AG04449 (cell line): ENCODE measurements at regions of chr20 and their contacts with region 1.

Region 1: GRCh38 chr20:47196091-47197081 is 160.1 kb downstream of the ZMYND8 start:
- DNase-seq: no peak
- H3K4me3 ChIP-seq: no peak overlapping the region
- CTCF ChIP-seq: peak; percentile 88

Region 2: DNA sequence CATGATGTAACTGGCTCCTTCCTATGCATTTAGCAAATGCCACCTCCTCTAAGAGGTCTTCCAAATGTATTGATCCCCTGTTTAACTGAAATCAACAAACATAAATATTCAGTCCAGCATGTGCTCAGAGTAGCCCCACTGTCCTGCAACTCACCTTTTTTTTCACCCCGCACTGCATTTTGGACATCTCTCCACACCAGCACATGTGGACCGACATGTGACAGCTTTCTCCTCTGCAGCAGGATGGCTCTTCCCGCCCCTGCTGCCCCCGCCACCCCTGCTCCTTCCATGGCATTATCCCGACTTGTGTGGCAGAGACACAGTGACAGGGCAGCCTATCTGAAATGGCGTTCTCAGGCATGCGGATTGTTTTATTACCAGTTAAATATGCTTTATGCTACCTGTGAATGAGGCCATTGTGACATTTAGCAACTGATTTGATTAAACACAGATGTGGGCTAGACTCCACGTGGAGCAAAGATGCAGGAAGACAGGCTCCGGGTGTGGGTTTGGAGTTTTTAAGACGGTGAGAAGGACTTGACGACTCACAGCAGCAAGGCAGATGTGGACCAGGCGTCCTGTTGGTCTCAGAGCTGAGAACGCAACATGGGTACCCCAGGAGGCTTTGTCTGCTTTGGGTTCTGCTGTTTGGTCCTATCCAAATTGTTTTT is 140.6 kb before region 1 on chr20:
- CTCF ChIA-PET with region 1: no interaction called
- POLR2A ChIA-PET with region 1: no interaction called
- DNase-seq: no peak
- H3K4me3 ChIP-seq: no peak overlapping the region
- CTCF ChIP-seq: no peak

Region 3: DNA sequence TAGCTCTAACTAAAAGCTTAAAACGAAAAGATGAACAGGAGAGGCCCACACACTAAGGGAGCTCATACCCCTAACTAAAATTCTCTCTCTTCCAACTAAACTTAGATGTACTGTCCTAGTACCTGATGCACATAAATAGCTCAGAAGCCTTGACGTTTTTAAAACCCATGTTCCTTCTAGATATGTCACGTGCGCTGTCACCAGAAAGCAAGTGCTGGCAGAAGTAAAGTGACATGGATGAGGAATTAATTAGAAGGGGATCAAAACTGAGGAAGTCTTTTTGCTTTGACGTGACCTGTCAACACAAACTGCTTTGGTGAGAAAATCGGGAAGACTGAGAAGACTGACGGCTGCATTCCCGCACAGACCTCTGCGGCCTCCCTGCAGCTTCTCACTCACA is 17.6 kb after region 1 on chr20:
- CTCF ChIA-PET with region 1: interaction called, 13 read pairs
- POLR2A ChIA-PET with region 1: no interaction called
- DNase-seq: no peak
- H3K4me3 ChIP-seq: no peak overlapping the region
- CTCF ChIP-seq: no peak

Region 4: DNA sequence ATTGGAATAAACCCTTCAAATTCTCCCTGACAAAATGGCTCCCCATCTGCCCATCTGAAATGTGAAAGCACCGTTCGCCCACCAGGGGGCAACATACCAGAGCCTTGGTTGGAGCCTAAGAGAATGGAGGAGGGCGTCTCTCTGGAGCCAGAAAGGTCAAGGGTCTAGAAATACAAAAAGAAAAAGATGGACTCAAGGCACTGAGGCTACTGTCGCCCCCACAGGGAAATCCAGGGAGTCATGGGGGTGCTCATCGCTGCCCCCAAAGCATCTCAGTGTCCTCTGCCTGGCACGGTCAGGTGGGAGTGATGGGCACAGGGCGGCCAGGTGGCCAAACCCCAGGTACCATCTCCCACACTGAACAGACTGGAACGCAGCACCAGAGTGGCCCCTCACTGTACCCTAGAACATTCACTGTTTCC is 23.8 kb after region 1 on chr20:
- CTCF ChIA-PET with region 1: interaction called, 13 read pairs
- POLR2A ChIA-PET with region 1: no interaction called
- DNase-seq: no peak
- H3K4me3 ChIP-seq: no peak overlapping the region
- CTCF ChIP-seq: peak; percentile 57